ENCODE measurements at regions of chr21 and their contacts with region 1.

Region 1: GRCh38 chr21:38355992-38356797 is 99.4 kb downstream of the KCNJ15 start:
- DNase-seq: peak; percentile 70
- H3K4me3 ChIP-seq: no peak overlapping the region
- H3K27ac ChIP-seq: no peak overlapping the region
- H3K4me1 ChIP-seq: peaks cover 14% of the 10 kb centered on the region
- H3K27me3 ChIP-seq: peaks cover 0 to 2% of the 10 kb centered on the region in 2 experiments
- CTCF ChIP-seq: peak; percentile 95 to 97
- POLR2A ChIP-seq: no peak

Region 2: DNA sequence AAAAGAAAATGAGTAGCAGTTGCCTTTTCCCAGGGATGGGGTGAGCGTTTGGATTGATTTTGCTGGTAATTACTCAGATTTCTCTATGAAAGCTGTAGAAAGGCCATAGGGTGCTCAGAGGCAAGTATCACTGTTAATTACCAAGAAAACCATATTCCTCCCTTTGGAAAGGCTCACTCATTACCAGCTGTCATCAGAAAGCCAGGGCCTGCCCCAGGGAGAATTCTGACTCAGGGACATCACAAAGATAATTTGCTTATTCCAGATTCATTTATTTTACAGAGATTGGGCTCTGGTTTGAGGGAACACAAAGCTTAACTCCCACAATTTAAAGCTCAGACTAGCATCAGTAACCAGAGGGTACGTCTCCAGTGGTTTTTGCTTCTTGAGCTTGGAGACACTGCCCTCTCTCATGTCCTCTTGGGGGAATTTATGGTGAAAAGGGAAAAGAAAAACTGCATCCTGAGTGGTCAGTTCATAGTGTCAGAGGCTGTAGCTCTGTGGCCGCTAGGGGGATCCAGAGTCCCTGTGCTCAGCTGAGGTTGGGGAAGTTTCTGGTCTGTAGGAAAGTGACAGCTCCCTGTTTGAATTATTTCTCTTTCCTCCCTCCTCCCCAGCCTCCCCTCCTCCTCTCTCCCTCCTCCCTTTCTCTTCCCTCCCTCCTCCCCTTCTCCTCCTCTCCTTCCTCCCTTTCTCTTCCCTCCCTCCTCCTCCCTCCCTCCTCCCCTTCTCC is 644.2 kb before region 1 on chr21:
- CTCF ChIA-PET with region 1: interaction called, 41 read pairs
- POLR2A ChIA-PET with region 1: no interaction called
- dilution Hi-C with region 1: no loop called
- intact Hi-C with region 1: loop called (anchors 1 kb)
- DNase-seq: peak; percentile 67
- H3K4me3 ChIP-seq: no peak overlapping the region
- H3K27ac ChIP-seq: no peak overlapping the region
- H3K4me1 ChIP-seq: no peaks in the 10 kb centered on the region
- H3K27me3 ChIP-seq: no peaks in the 10 kb centered on the region
- CTCF ChIP-seq: peak; percentile 82 to 95
- POLR2A ChIP-seq: no peak

Region 3: GRCh38 chr21:38159355-38159754 is 196.8 kb before region 1 on chr21:
- CTCF ChIA-PET with region 1: interaction called, 740 read pairs
- POLR2A ChIA-PET with region 1: no interaction called
- dilution Hi-C with region 1: loop called (anchors 10 kb)
- intact Hi-C with region 1: loop called (anchors 1 kb)
- DNase-seq: peak; percentile 81
- H3K4me3 ChIP-seq: no peak overlapping the region
- H3K27ac ChIP-seq: no peak overlapping the region
- H3K4me1 ChIP-seq: no peaks in the 10 kb centered on the region
- H3K27me3 ChIP-seq: peaks cover 20 to 29% of the 10 kb centered on the region in 2 experiments
- CTCF ChIP-seq: peak; percentile 84 to 93
- POLR2A ChIP-seq: no peak

Region 4: GRCh38 chr21:38202811-38203210 is 153.4 kb before region 1 on chr21:
- CTCF ChIA-PET with region 1: interaction called, 16 read pairs
- POLR2A ChIA-PET with region 1: interaction called, 4 read pairs
- dilution Hi-C with region 1: no loop called
- intact Hi-C with region 1: no loop called
- DNase-seq: no peak
- H3K4me3 ChIP-seq: no peak overlapping the region
- H3K27ac ChIP-seq: no peak overlapping the region
- H3K4me1 ChIP-seq: no peaks in the 10 kb centered on the region
- H3K27me3 ChIP-seq: peaks cover 8 to 11% of the 10 kb centered on the region in 2 experiments
- CTCF ChIP-seq: no peak
- POLR2A ChIP-seq: no peak

Region 5: GRCh38 chr21:38229260-38229868 is 126.8 kb before region 1 on chr21:
- CTCF ChIA-PET with region 1: interaction called, 24 read pairs
- POLR2A ChIA-PET with region 1: no interaction called
- dilution Hi-C with region 1: no loop called
- intact Hi-C with region 1: no loop called
- DNase-seq: no peak
- H3K4me3 ChIP-seq: no peak overlapping the region
- H3K27ac ChIP-seq: no peak overlapping the region
- H3K4me1 ChIP-seq: no peaks in the 10 kb centered on the region
- H3K27me3 ChIP-seq: no peaks in the 10 kb centered on the region
- CTCF ChIP-seq: no peak
- POLR2A ChIP-seq: no peak

Region 6: GRCh38 chr21:38306433-38307141 is 49.6 kb before region 1 on chr21:
- CTCF ChIA-PET with region 1: interaction called, 20 read pairs
- POLR2A ChIA-PET with region 1: no interaction called
- dilution Hi-C with region 1: no loop called
- intact Hi-C with region 1: loop called (anchors 2 kb)
- DNase-seq: peak; percentile 90
- H3K4me3 ChIP-seq: no peak overlapping the region
- H3K27ac ChIP-seq: peak overlapping the region; percentile 43
- H3K4me1 ChIP-seq: peaks cover 25% of the 10 kb centered on the region
- H3K27me3 ChIP-seq: no peaks in the 10 kb centered on the region
- CTCF ChIP-seq: no peak
- POLR2A ChIP-seq: no peak

Measured in endothelial cell of umbilical vein (primary cell).